Posterior vena cava (tissue), 2 donors: ENCODE measurements at regions of chr4 and their contacts with region 1.

Region 1: DNA sequence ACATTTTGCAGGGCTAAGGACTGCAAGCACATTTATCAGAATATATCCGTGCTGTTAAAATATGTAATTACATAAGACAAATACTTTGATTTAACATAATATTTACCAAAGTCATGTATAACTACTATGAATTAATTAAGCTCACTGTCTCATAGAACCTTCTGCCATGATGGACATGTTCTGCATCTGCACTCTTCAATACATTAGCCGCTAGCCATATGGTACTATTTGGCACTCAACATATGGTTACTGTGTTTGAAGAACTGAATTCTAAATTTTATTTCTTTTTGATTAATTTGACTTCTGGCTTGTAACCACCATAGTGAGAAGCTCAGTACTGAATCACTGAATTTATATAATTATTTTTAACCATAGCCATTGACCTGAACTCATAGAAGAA is 427.0 kb upstream of the TRAM1L1 start:
- DNase-seq: no peak

Region 2: GRCh38 chr4:117210551-117210950 is 301.9 kb before region 1 on chr4:
- intact Hi-C with region 1: loop called in 1 of 2 experiments (anchors 5 kb)
- DNase-seq: no peak

Region 3: GRCh38 chr4:117533501-117533900 is 21.1 kb after region 1 on chr4:
- intact Hi-C with region 1: no loop called
- DNase-seq: no peak